Prostate gland (tissue), 2 donors: ENCODE measurements at regions of chr6 and their contacts with region 1.

Region 1: DNA sequence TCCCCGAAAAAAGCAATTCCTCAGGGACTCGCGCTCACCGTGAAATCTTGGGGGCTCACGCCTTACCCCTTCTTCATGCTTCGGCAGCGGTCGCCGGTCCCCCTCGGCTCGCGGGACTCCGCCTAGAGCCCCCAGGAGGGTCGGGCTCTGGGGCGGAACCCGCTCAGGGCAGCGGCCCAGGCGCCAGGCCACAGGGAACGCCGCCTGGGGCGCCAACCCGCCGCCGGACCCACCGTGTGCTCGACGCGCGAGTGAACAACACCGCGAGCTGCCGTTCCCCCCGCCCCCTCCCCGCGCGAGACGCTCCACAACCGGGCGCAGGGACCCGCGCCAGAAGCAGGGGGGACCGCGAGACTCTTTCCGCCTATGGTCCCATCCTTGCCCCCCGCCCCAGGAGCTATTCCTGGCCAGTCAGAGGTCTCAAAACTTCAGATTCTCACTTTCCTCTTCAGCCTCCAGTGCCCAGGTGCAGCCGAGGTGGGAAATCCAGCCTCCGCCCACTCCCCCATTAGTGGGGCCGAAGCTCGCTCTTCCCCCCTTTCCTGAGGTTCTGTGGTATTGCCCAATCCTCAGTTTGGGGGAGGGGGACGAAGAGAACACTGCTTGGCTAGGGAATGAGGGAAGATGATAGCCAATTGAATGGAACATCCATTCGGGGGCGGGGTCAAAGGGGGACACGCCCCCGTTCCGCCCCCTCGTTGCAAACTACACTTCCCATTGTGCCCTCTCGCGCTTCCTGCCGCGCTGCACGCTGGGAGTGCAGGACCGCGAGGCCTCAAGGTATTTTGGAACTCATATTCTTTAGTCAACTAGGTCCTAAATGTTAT is at the start of gene WASF1:
- DNase-seq: peak; percentile 94
- H3K4me3 ChIP-seq: peak within 1 kb of the TSS; percentile 58 to 63
- H3K27ac ChIP-seq: peak within 1 kb of the TSS; percentile 72 to 77
- H3K4me1 ChIP-seq: peaks cover 6% of the 10 kb centered on the region
- H3K27me3 ChIP-seq: no peaks in the 10 kb centered on the region
- CTCF ChIP-seq: peak in 1 of 4 experiments; percentile 41
- POLR2A ChIP-seq: peak; percentile 48
- total RNA-seq, gene WASF1: 8.0 to 56.8 TPM

Region 2: GRCh38 chr6:109482905-109483735 is 696.5 kb before region 1 on chr6 and contains the start of gene ZBTB24:
- intact Hi-C with region 1: loop called (anchors 5 kb)
- DNase-seq: peak; percentile 91
- H3K4me3 ChIP-seq: peak within 1 kb of the TSS; percentile 97 to 99
- H3K27ac ChIP-seq: peak within 1 kb of the TSS; percentile 75 to 76
- H3K4me1 ChIP-seq: peaks cover 4% of the 10 kb centered on the region
- H3K27me3 ChIP-seq: no peaks in the 10 kb centered on the region
- CTCF ChIP-seq: peak in 2 of 4 experiments; percentile 4 to 8
- POLR2A ChIP-seq: peak; percentile 51
- total RNA-seq, gene ZBTB24: 8.2 to 12.8 TPM

Region 3: GRCh38 chr6:110125361-110125760 is 54.3 kb before region 1 on chr6:
- intact Hi-C with region 1: no loop called
- DNase-seq: no peak
- H3K4me3 ChIP-seq: no peak overlapping the region
- H3K27ac ChIP-seq: no peak overlapping the region
- H3K4me1 ChIP-seq: no peaks in the 10 kb centered on the region
- H3K27me3 ChIP-seq: no peaks in the 10 kb centered on the region
- CTCF ChIP-seq: no peak
- POLR2A ChIP-seq: no peak

Region 4: DNA sequence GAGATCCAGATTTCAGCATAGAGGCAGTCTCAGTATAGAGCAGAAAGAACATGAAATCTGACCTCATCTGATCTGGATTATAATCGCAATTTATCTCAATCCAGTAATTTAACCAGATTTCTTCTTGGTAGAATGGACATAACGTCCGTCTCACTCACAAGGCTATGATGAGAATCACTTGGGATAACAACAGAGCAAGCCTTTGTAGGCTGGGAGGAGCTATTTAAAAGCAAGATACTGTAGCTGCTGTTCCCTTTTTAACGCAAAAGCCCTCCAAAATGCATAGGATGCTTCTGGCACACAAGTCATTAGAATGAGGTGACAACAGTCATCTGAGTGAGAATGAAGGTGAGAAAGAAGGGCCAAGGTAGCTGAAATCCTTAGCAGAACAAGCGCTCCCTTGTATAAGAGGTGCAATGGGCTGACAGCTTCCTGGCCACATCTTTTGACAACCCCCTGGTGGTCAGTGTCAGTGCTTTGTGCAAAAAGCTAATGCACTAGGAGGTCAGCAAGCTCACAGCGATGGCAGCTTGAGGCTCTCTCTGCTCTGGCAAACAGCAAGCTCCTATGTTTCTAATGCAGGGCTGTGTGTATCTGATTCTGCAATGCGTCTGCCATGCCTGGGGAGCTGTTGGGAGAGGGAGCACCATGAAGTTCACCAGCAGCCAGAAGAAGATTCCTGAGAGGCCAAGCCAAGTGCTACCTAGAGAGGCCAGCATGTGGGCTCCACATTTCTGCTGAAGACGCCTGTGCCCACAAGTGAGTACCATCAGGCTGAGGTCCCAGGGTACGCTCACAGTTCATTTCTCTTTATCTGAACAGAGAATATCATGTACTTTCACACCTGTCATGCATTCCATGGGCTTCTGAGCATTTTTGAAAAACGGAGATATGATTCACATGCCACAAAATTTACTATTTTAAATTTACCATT is 162.3 kb after region 1 on chr6:
- intact Hi-C with region 1: loop called (anchors 5 kb)
- DNase-seq: no peak
- H3K4me3 ChIP-seq: no peak overlapping the region
- H3K27ac ChIP-seq: no peak overlapping the region
- H3K4me1 ChIP-seq: no peaks in the 10 kb centered on the region
- H3K27me3 ChIP-seq: no peaks in the 10 kb centered on the region
- CTCF ChIP-seq: no peak
- POLR2A ChIP-seq: no peak

Region 5: DNA sequence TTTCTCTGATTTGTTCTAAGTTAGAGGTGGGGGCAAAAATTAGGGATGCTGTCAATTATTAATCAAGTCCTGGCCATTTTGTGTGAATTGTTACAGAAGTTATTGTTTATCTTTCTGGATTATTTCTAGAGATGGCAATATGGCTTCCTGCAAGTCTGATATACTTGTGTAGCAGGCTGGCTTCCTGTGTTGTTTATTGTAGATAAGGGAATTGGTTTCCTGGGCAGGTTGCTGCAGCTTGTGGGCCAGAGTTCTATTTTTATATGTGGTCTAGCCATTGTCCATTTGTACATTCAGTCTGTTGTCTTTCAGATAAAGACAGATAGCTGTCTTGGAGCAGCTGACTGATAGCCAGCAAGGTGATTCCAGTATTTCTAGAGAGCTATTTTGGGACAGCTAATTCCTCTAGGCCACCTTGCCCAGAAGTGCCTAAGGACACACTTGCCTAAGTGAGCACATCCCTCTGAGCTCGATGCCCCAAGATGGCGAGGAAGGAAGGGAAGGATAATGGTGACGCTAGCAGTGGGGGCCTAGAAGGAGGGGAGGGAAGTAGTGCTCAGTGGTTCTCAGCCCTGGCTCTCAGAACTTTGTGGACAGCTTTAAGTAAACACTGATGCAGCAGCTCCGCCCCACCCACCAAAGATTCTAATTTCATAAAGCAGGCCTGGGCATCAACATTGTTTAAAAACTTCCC is 210.2 kb after region 1 on chr6:
- intact Hi-C with region 1: loop called (anchors 1 kb)
- DNase-seq: no peak
- H3K4me3 ChIP-seq: no peak overlapping the region
- H3K27ac ChIP-seq: no peak overlapping the region
- H3K4me1 ChIP-seq: no peaks in the 10 kb centered on the region
- H3K27me3 ChIP-seq: no peaks in the 10 kb centered on the region
- CTCF ChIP-seq: no peak
- POLR2A ChIP-seq: no peak

Region 6: DNA sequence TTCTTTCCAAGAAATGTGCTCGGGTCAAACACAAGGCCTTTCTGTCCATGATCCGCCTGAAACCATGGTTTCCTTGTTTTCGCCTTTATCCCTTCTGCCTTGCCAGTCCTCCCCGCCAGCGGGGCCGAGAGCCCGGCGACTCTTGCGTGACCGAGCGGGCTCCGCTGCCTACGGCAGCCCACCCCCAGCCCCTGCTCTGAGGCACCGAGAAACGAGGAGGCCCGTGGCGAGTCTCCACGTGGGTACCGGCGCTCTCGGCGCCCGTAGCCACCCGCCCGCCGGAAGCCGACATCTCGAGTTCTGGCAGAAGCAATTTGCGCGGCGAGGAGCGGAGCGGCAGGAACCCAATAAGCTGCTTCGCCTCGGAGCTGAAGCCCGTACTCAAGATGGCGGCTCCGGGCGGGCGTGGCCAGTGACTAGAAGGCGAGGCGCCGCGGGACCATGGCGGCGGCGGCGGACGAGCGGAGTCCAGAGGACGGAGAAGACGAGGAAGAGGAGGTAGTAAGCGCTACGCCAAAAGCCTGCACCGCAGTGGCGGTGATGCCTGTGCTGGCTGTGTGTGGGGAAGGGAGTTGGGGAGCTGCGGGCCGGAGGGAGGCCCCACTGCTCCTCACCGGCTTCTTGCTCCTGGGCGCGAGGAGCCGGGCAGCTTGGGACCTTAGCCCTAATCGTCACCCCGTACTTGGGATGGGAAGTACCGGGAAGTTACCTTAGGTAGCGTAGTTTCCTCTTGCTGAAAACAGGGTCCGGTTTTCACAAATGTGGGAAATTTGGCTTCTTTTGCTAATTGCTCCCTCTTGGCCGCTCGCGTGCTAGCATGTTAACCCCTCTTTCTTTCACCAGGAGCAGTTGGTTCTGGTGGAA is 778.9 kb after region 1 on chr6 and contains the start of gene GTF3C6:
- intact Hi-C with region 1: loop called (anchors 5 kb)
- DNase-seq: peak; percentile 92
- H3K4me3 ChIP-seq: peak within 1 kb of the TSS; percentile 69 to 91
- H3K27ac ChIP-seq: peak within 1 kb of the TSS; percentile 84 to 92
- H3K4me1 ChIP-seq: no peaks in the 10 kb centered on the region
- H3K27me3 ChIP-seq: no peaks in the 10 kb centered on the region
- CTCF ChIP-seq: peak in 1 of 4 experiments; percentile 17
- POLR2A ChIP-seq: peak; percentile 73
- total RNA-seq, gene GTF3C6: 72.0 to 98.1 TPM